Endothelial cell of umbilical vein (primary cell): ENCODE measurements at regions of chr6 and their contacts with region 1.

Region 1: GRCh38 chr6:126176282-126176681 is 163.6 kb upstream of the CENPW start:
- DNase-seq: peak; percentile 51
- H3K4me3 ChIP-seq: no peak overlapping the region
- H3K27ac ChIP-seq: no peak overlapping the region
- H3K4me1 ChIP-seq: no peaks in the 10 kb centered on the region
- H3K27me3 ChIP-seq: no peaks in the 10 kb centered on the region
- CTCF ChIP-seq: peak; percentile 17 to 42
- POLR2A ChIP-seq: no peak

Region 2: GRCh38 chr6:126033696-126034095 is 142.6 kb before region 1 on chr6:
- CTCF ChIA-PET with region 1: interaction called, 27 read pairs
- POLR2A ChIA-PET with region 1: no interaction called
- dilution Hi-C with region 1: no loop called
- intact Hi-C with region 1: loop called (anchors 1 kb)
- DNase-seq: peak; percentile 78
- H3K4me3 ChIP-seq: no peak overlapping the region
- H3K27ac ChIP-seq: no peak overlapping the region
- H3K4me1 ChIP-seq: no peaks in the 10 kb centered on the region
- H3K27me3 ChIP-seq: no peaks in the 10 kb centered on the region
- CTCF ChIP-seq: peak; percentile 56 to 65
- POLR2A ChIP-seq: no peak

Region 3: GRCh38 chr6:126312013-126312663 is 135.9 kb after region 1 on chr6:
- CTCF ChIA-PET with region 1: interaction called, 12 read pairs
- POLR2A ChIA-PET with region 1: no interaction called
- dilution Hi-C with region 1: no loop called
- intact Hi-C with region 1: loop called (anchors 1 kb)
- DNase-seq: peak; percentile 27
- H3K4me3 ChIP-seq: no peak overlapping the region
- H3K27ac ChIP-seq: no peak overlapping the region
- H3K4me1 ChIP-seq: no peaks in the 10 kb centered on the region
- H3K27me3 ChIP-seq: no peaks in the 10 kb centered on the region
- CTCF ChIP-seq: peak; percentile 23 to 26
- POLR2A ChIP-seq: no peak

Region 4: DNA sequence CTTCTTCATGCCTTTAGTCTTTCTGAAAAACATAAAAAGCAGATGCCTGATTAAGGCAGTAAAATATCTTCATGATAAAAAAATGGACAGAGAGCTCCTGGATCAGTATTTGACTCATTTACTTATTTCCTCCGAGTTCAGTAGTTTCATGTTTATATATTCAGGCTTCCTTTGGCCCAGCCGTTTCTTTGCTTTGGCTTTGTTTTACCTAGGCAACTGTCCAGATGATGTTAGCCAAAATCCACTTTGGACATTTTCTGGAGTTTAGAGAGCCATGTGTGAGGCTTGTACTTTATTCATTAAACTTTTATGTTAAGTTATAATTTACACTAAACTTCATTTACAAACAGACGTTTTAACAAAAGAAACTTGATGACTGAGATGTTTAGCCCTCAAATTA is 635.0 kb after region 1 on chr6:
- CTCF ChIA-PET with region 1: no interaction called
- POLR2A ChIA-PET with region 1: no interaction called
- dilution Hi-C with region 1: no loop called
- intact Hi-C with region 1: loop called (anchors 5 kb)
- DNase-seq: peak; percentile 85
- H3K4me3 ChIP-seq: no peak overlapping the region
- H3K27ac ChIP-seq: peak overlapping the region; percentile 79
- H3K4me1 ChIP-seq: peaks cover 27% of the 10 kb centered on the region
- H3K27me3 ChIP-seq: no peaks in the 10 kb centered on the region
- CTCF ChIP-seq: no peak
- POLR2A ChIP-seq: no peak